ENCODE measurements at regions of chr2 and their contacts with region 1.

Region 1: DNA sequence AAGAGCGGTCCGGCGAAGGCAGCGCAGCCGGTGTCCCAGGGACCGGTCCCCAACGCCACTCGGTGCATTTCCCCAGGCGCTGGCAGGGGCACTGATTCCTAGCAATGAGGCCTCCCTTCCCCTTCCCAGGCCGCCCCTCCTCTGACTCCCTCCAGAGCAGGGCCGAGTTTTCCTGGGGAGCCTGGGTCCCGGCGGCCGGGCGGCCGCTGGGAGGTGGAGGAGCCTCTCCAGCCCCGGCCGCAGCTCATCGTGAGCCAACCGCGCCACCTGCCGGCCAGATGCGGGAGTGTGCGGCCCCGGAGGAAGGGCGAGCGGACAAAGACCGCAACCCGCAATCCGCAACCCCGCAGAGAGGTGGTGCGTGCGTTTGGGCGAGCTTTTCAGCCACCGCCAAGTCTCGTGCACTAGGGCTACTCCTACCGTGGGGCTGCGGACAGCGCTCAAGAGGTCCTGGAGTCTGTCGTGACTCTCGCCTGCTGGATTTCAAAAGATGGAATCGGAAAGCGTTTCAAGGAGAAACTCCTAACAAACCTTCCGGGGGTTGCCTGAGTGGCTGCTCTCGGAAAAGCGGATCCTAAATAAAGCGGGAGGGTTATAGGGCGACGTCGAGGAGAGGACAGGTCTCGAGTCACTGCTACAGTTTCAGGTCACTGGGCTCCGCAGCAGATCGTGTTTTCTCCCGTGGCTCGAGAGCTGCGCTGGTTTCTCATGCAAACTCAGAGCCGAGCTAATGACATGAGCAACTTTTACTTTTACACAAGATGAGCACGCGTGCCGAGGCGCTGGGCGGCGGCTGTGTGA is 1.5 kb upstream of the EPHA4 start:
- DNase-seq: peak; percentile 81
- H3K4me3 Mint-ChIP-seq: peak overlapping the region; percentile 45
- H3K27ac Mint-ChIP-seq: no peak overlapping the region
- H3K4me1 Mint-ChIP-seq: peaks cover 25% of the 10 kb centered on the region
- H3K27me3 Mint-ChIP-seq: peaks cover 52% of the 10 kb centered on the region

Region 2: GRCh38 chr2:219997341-219997851 is 1576.2 kb before region 1 on chr2:
- CTCF ChIA-PET with region 1: no interaction called
- intact Hi-C with region 1: loop called (anchors 1 kb)
- DNase-seq: peak; percentile 44
- H3K4me3 Mint-ChIP-seq: no peak overlapping the region
- H3K27ac Mint-ChIP-seq: no peak overlapping the region
- H3K4me1 Mint-ChIP-seq: no peaks in the 10 kb centered on the region
- H3K27me3 Mint-ChIP-seq: peaks cover 7% of the 10 kb centered on the region

Region 3: DNA sequence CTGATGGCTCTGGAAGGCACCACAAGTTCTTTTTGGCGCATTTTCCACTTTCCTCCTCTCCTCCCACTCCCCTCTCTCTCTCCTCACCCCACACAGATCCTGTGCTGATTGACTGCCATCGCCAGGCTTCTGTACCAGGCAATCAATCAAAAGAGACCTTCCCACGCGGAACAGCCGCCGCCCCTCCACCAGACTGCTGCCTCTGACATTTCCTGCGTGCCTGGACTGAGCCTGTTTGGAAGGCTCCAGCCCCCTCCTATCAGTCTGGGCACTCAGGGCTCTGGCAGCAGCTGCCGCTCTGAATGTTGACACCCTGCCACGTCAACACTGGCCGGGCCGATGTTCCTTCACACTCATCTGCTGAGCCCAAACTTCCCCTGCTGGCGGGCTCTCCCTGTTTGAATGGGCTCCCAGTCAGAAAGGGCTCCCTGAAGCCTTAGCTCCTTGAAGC is 469.2 kb before region 1 on chr2:
- CTCF ChIA-PET with region 1: no interaction called
- intact Hi-C with region 1: loop called (anchors 10 kb)
- DNase-seq: no peak
- H3K4me3 Mint-ChIP-seq: no peak overlapping the region
- H3K27ac Mint-ChIP-seq: peak overlapping the region; percentile 46
- H3K4me1 Mint-ChIP-seq: no peaks in the 10 kb centered on the region
- H3K27me3 Mint-ChIP-seq: peaks cover 20% of the 10 kb centered on the region

Region 4: DNA sequence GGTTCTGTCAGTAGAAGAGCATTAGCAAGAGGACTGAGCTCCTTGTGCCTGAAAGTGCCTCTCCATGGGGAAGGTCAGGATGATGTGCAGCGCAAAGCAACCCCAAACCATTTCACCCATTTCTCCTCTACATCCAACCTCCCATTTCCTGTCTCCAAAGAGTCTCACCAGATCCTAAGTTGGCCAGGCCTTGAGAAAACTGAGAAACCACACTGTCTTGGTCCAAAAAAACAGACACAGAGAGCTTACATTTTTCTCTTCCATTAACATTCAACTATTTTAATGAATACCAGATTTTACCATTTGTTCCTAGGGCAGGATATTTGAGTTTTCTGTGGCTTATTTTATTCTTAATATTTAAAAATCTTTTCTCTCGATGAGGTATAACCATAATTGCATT is 196.6 kb before region 1 on chr2:
- CTCF ChIA-PET with region 1: no interaction called
- intact Hi-C with region 1: loop called (anchors 5 kb)
- DNase-seq: no peak
- H3K4me3 Mint-ChIP-seq: no peak overlapping the region
- H3K27ac Mint-ChIP-seq: no peak overlapping the region
- H3K4me1 Mint-ChIP-seq: no peaks in the 10 kb centered on the region
- H3K27me3 Mint-ChIP-seq: no peaks in the 10 kb centered on the region

Region 5: DNA sequence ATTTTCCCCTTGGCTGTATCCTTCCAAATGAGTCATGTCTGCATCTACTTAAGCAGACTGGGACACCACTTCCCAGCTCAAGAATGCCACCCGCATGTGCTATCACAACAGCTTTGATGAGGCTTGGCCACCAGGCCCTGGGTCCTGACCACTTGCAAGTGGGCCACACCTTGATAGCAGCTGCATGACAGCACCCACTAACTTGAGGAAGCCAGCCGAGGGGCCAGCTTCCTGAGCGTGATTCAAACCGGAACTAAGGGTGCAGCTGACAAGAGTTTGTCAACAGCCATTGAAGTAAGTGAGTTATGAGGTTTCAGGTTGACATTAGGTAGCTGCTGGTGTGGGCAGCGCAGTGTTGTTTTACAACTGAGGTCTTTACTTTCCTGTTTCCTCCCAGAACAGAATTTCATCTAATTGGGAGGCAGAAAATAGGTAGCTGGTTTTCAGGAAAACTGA is 55.9 kb before region 1 on chr2:
- CTCF ChIA-PET with region 1: no interaction called
- intact Hi-C with region 1: loop called (anchors 1 kb)
- DNase-seq: peak; percentile 83
- H3K4me3 Mint-ChIP-seq: no peak overlapping the region
- H3K27ac Mint-ChIP-seq: no peak overlapping the region
- H3K4me1 Mint-ChIP-seq: no peaks in the 10 kb centered on the region
- H3K27me3 Mint-ChIP-seq: no peaks in the 10 kb centered on the region

Measured in activated naive CD4-positive, alpha-beta T cell treated with anti-CD3 and anti-CD28 coated beads for 36 hours (primary cell).